Activated CD4-positive, alpha-beta memory T cell treated with anti-CD3 and anti-CD28 coated beads for 36 hours (primary cell): ENCODE measurements at regions of chr5 and their contacts with region 1.

Region 1: DNA sequence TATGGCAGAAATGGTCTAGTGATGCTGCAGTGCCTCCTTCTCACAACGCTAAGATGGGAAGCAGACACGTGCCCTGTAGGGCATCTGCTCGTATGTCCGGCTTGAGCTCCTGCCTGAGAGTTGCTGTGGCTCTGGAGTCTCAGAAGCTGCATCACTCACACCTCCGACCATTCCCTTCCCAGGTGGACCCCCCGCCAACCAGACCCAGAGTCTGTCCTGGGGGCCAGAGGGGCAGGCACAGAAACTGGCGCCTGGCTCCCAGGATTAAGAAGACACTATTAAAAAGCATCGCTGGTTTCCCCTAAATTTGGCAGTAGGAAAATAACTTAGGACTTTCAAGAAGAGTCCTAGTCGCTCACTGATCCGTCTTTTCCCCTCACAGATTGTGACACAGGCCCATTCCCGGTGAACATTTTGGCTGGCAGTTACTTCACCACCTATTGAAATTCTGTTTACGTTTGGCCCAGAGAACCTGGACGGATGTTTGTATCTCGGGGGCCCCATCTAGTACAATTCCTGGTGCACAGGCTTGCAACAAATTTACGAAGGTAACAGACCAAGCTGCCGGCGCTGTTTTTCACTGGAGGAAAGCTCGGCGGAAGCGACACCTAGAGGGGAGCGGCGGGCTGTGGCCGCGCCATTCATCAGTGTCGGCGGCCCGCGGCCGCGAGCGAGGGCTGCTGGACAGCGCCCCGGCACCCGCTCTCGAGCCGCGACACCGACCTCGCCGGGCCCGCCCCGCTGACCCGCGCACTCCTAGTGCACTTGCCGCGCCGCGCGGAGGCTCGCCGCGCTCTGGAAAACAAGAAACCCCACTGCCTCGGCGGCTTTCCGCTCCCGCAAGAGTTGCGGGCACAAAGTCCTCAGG is 1.6 kb downstream of the FSTL4 start:
- DNase-seq: peak; percentile 67
- H3K4me3 Mint-ChIP-seq: peak overlapping the region; percentile 50
- H3K27ac Mint-ChIP-seq: no peak overlapping the region
- H3K4me1 Mint-ChIP-seq: peaks cover 7% of the 10 kb centered on the region
- H3K27me3 Mint-ChIP-seq: peaks cover 51% of the 10 kb centered on the region

Region 2: DNA sequence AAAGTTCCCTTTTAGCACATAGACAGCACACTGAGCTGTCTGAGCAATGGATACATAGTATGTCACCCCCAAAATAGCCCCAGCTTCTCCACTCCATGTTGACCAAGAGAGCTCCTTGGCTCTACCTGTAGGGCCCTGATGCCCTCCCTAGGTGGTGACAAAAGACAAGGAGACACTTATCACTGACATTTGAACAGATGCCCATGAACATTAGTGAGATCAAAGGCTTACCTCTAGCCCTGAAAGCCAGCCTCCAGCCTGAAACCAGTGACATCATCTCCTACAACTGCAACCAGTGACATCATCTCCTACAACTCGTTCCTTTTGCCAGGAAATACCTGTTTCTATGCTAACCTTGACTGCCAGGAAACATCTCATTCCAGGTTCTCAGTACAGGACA is 121.1 kb before region 1 on chr5:
- CTCF ChIA-PET with region 1: no interaction called
- POLR2A ChIA-PET with region 1: no interaction called
- intact Hi-C with region 1: loop called (anchors 10 kb)
- DNase-seq: peak; percentile 49
- H3K4me3 Mint-ChIP-seq: no peak overlapping the region
- H3K27ac Mint-ChIP-seq: no peak overlapping the region
- H3K4me1 Mint-ChIP-seq: peaks cover 5% of the 10 kb centered on the region
- H3K27me3 Mint-ChIP-seq: no peaks in the 10 kb centered on the region

Region 3: GRCh38 chr5:133552931-133553525 is 57.7 kb before region 1 on chr5:
- CTCF ChIA-PET with region 1: interaction called, 3 read pairs
- POLR2A ChIA-PET with region 1: no interaction called
- intact Hi-C with region 1: loop called (anchors 2 kb)
- DNase-seq: peak; percentile 71
- H3K4me3 Mint-ChIP-seq: no peak overlapping the region
- H3K27ac Mint-ChIP-seq: no peak overlapping the region
- H3K4me1 Mint-ChIP-seq: no peaks in the 10 kb centered on the region
- H3K27me3 Mint-ChIP-seq: peaks cover 19% of the 10 kb centered on the region

Region 4: DNA sequence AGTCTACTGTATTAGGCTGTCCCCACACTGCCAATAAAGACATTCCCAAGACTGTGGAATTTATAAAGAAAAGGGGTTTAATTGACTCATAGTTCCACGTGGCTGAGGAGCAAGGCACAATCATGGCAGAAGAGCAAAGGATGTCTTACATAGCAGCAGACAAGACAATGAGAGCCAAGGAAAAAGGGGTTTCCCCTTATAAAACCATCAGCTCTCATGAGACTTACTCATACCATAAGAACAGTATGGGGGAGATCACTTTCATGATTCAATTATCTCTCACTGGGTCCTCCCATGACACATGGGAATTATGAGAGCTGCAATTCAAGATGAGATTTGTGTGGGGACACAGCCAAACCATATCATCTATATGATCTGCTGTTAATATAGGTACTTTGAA is 16.5 kb after region 1 on chr5:
- CTCF ChIA-PET with region 1: interaction called, 3 read pairs
- POLR2A ChIA-PET with region 1: no interaction called
- intact Hi-C with region 1: loop called (anchors 2 kb)
- DNase-seq: no peak
- H3K4me3 Mint-ChIP-seq: no peak overlapping the region
- H3K27ac Mint-ChIP-seq: no peak overlapping the region
- H3K4me1 Mint-ChIP-seq: peaks cover 2% of the 10 kb centered on the region
- H3K27me3 Mint-ChIP-seq: peaks cover 46% of the 10 kb centered on the region